Caco-2 (cell line): ENCODE measurements at regions of chr13 and their contacts with region 1.

Region 1: GRCh38 chr13:105168295-105168694 is 1367.2 kb downstream of the EFNB2 start:
- DNase-seq: no peak
- H3K4me3 ChIP-seq: no peak overlapping the region
- H3K4me3 Mint-ChIP-seq: no peak overlapping the region
- H3K27ac Mint-ChIP-seq: no peak overlapping the region
- H3K4me1 ChIP-seq: no peaks in the 10 kb centered on the region
- H3K4me1 Mint-ChIP-seq: no peaks in the 10 kb centered on the region
- H3K27me3 ChIP-seq: no peaks in the 10 kb centered on the region
- H3K27me3 Mint-ChIP-seq: peaks cover 3% of the 10 kb centered on the region
- CTCF ChIP-seq: no peak

Region 2: GRCh38 chr13:104773775-104774174 is 394.5 kb before region 1 on chr13:
- CTCF ChIA-PET with region 1: no interaction called
- POLR2A ChIA-PET with region 1: no interaction called
- intact Hi-C with region 1: loop called (anchors 2 kb)
- DNase-seq: peak in 1 of 2 experiments; percentile 23
- H3K4me3 ChIP-seq: no peak overlapping the region
- H3K4me3 Mint-ChIP-seq: no peak overlapping the region
- H3K27ac Mint-ChIP-seq: no peak overlapping the region
- H3K4me1 ChIP-seq: no peaks in the 10 kb centered on the region
- H3K4me1 Mint-ChIP-seq: no peaks in the 10 kb centered on the region
- H3K27me3 ChIP-seq: no peaks in the 10 kb centered on the region
- H3K27me3 Mint-ChIP-seq: no peaks in the 10 kb centered on the region
- CTCF ChIP-seq: peak; percentile 51 to 62